A673 (cell line): ENCODE measurements at regions of chr5 and their contacts with region 1.

Region 1: GRCh38 chr5:112616812-112617547 is 120.7 kb upstream of the APC start:
- DNase-seq: no peak
- H3K4me3 ChIP-seq: peak overlapping the region; percentile 22
- H3K27ac ChIP-seq: no peak overlapping the region
- H3K4me1 ChIP-seq: no peaks in the 10 kb centered on the region
- H3K27me3 ChIP-seq: no peaks in the 10 kb centered on the region
- CTCF ChIP-seq: no peak

Region 2: DNA sequence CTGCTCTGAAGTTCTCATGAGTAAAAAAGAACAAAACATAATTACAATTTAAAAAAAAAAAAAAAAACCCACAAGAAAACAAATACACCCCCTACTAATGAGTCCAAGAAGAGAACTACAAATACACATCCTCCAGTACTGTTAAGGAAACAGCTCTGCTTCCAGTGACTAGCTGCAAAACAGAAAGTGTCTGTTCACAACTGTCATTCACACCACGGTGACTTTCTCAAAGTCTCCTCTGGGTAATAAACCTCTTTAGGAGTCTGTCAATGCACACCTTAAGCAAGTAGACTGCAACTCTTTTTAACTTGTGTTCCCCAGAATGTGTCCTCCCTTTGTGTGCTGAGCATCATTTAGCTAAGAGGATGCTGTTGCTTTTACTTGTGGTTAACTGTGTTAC is 298.9 kb after region 1 on chr5:
- CTCF ChIA-PET with region 1: no interaction called
- POLR2A ChIA-PET with region 1: interaction called, 10 read pairs
- intact Hi-C with region 1: no loop called
- DNase-seq: no peak
- H3K4me3 ChIP-seq: no peak overlapping the region
- H3K27ac ChIP-seq: no peak overlapping the region
- H3K4me1 ChIP-seq: peaks cover 16% of the 10 kb centered on the region
- H3K27me3 ChIP-seq: no peaks in the 10 kb centered on the region
- CTCF ChIP-seq: no peak

Region 3: GRCh38 chr5:113713051-113713450 is 1096.1 kb after region 1 on chr5:
- CTCF ChIA-PET with region 1: no interaction called
- POLR2A ChIA-PET with region 1: no interaction called
- intact Hi-C with region 1: no loop called
- DNase-seq: peak; percentile 4
- H3K4me3 ChIP-seq: no peak overlapping the region
- H3K27ac ChIP-seq: no peak overlapping the region
- H3K4me1 ChIP-seq: no peaks in the 10 kb centered on the region
- H3K27me3 ChIP-seq: no peaks in the 10 kb centered on the region
- CTCF ChIP-seq: no peak